Common myeloid progenitor, CD34-positive (primary cell): ENCODE measurements at regions of chr15 and their contacts with region 1.

Region 1: DNA sequence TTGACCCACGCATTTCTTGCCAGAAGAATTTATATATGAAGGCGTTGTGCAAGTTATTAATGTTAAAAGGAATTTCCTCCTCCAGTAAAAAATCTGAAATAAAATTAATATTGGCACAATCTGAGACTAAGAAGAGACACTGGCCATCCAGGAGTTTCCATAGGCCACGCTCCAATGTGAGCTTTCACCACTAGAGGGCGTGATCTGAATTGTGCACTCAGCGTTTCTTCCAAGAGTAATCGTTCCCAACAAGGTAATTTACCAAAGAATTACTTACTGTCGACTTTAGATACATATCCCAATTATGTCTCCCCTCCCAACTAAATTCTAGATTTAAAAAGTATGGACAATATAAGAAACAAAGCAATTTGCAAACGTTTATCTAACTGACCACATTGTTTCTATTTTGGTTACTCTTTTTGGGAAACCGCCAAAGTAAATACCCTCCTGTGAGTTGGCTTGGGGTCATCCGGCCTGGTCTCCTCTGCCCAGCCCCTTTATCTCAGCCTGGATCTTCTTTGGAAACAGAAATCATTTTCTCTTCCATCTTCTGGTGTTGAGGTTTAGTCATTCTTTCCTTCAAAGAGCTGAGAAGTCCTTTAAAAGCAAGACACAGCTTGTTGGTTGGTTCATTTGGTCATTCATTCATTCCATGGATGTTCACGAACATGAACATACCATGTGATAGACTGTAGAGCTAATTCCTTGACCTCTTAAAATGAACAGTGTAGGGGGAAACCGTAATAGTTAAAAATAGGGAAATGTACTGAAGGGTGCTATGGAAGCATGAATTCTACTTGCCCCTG is 26.2 kb downstream of the POLR2M start:
- DNase-seq: peak; percentile 44 to 62 (median 47)
- H3K4me3 ChIP-seq: no peak overlapping the region
- H3K27ac ChIP-seq: no peak overlapping the region
- H3K4me1 ChIP-seq: peaks cover 0 to 4% (median 0%) of the 10 kb centered on the region in 4 experiments
- H3K27me3 ChIP-seq: no peaks in the 10 kb centered on the region

Region 2: GRCh38 chr15:57706405-57707209 is 26.1 kb before region 1 on chr15 and contains the start of gene POLR2M:
- CTCF ChIA-PET with region 1: interaction called, 12 read pairs
- POLR2A ChIA-PET with region 1: no interaction called
- DNase-seq: peak; percentile 98 to 99 (median 99)
- H3K4me3 ChIP-seq: peak within 1 kb of the TSS; percentile 88 to 99 (median 98)
- H3K27ac ChIP-seq: peak within 1 kb of the TSS; percentile 71 to 89
- H3K4me1 ChIP-seq: peaks cover 12 to 27% (median 14%) of the 10 kb centered on the region in 4 experiments
- H3K27me3 ChIP-seq: peaks cover 0 to 12% (median 0%) of the 10 kb centered on the region in 5 experiments

Region 3: GRCh38 chr15:57720867-57721266 is 11.9 kb before region 1 on chr15:
- CTCF ChIA-PET with region 1: interaction called, 10 read pairs
- POLR2A ChIA-PET with region 1: interaction called, 3 read pairs
- DNase-seq: no peak
- H3K4me3 ChIP-seq: no peak overlapping the region
- H3K27ac ChIP-seq: no peak overlapping the region
- H3K4me1 ChIP-seq: no peaks in the 10 kb centered on the region
- H3K27me3 ChIP-seq: no peaks in the 10 kb centered on the region

Region 4: DNA sequence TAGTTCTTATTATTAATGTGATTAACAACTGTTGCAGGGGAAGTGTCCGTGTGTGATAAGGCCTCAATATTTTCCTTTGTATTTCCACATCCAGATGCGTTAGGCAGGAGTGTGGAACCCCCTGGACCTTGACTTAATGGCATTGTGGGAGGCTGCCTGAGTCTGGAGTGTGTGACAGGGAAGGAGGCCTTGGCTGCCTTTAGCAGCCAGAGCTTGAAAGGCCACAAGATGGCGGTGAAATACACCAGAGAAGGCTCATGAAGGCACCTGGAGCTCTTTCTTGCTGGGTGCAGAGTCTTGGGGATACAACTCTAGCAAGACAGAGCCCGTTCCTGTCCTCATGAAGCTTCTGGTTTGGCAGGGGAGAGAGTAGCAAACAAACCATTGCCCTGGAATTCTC is 10.7 kb after region 1 on chr15:
- CTCF ChIA-PET with region 1: interaction called, 29 read pairs
- POLR2A ChIA-PET with region 1: no interaction called
- DNase-seq: peak; percentile 6 to 16 (median 13)
- H3K4me3 ChIP-seq: no peak overlapping the region
- H3K27ac ChIP-seq: no peak overlapping the region
- H3K4me1 ChIP-seq: peaks cover 0 to 10% (median 3%) of the 10 kb centered on the region in 4 experiments
- H3K27me3 ChIP-seq: peaks cover 0 to 2% (median 0%) of the 10 kb centered on the region in 5 experiments

Region 5: GRCh38 chr15:57758560-57758959 is 25.8 kb after region 1 on chr15:
- CTCF ChIA-PET with region 1: no interaction called
- POLR2A ChIA-PET with region 1: no interaction called
- DNase-seq: no peak
- H3K4me3 ChIP-seq: no peak overlapping the region
- H3K27ac ChIP-seq: no peak overlapping the region
- H3K4me1 ChIP-seq: no peaks in the 10 kb centered on the region
- H3K27me3 ChIP-seq: peaks cover 0 to 30% (median 4%) of the 10 kb centered on the region in 5 experiments

Region 6: DNA sequence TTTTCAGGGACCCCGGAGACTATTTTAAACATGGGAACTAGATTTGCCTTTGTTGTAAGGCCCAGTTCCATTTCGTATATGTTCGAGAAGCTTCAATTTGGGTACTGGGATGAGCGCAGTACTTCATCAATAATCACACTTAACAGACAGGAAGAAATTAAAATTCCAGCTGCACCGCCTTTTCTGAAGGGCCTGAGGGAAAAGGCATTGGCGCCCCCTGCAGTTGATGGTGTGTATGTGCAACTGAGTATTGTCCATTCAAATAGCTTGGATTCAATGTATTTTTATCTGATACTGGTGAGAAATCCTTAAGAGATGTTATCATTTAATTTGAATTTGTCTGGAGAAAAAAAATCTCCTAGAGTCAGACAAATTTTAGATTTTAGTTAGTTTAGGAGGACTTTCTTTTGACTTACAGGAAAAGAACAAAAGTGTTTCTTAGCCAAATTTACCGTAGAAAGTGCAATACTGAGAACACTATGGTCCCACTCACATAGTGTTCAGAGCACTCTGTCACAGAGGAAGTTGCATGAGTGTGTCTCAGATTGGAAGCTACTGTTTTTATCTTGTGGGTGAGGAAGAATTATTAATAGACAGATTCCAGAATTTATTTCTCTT is 338.2 kb after region 1 on chr15:
- CTCF ChIA-PET with region 1: interaction called, 11 read pairs
- POLR2A ChIA-PET with region 1: no interaction called
- DNase-seq: peak; percentile 48 to 69 (median 61)
- H3K4me3 ChIP-seq: no peak overlapping the region
- H3K27ac ChIP-seq: no peak overlapping the region
- H3K4me1 ChIP-seq: peaks cover 0 to 6% (median 6%) of the 10 kb centered on the region in 4 experiments
- H3K27me3 ChIP-seq: peaks cover 4 to 52% (median 19%) of the 10 kb centered on the region in 5 experiments